Breast epithelium (tissue), 4 donors: ENCODE measurements at regions of chr15 and their contacts with region 1.

Region 1: DNA sequence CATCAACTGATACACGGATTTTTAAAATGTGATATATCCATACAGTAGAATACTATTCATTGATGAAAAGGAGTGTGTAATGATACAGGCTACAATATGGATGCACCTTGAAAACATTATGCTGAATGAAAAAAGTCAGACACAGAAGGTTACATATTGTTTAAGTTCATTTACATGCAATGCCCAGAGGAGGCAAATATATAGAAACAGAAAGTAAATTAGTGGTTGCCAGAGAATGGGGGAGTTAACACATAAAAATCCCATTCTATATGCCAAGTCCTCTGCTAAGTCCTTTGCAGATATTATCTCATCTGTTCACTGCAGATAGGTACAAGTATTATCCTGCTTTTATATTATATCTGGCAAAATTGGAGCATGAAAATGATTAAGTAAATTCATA is 22.1 kb upstream of the CDIN1 start:
- DNase-seq: no peak
- H3K4me3 ChIP-seq: no peak overlapping the region
- H3K27ac ChIP-seq: no peak overlapping the region
- H3K4me1 ChIP-seq: no peaks in the 10 kb centered on the region
- H3K27me3 ChIP-seq: no peaks in the 10 kb centered on the region
- CTCF ChIP-seq: no peak
- POLR2A ChIP-seq: no peak

Region 2: DNA sequence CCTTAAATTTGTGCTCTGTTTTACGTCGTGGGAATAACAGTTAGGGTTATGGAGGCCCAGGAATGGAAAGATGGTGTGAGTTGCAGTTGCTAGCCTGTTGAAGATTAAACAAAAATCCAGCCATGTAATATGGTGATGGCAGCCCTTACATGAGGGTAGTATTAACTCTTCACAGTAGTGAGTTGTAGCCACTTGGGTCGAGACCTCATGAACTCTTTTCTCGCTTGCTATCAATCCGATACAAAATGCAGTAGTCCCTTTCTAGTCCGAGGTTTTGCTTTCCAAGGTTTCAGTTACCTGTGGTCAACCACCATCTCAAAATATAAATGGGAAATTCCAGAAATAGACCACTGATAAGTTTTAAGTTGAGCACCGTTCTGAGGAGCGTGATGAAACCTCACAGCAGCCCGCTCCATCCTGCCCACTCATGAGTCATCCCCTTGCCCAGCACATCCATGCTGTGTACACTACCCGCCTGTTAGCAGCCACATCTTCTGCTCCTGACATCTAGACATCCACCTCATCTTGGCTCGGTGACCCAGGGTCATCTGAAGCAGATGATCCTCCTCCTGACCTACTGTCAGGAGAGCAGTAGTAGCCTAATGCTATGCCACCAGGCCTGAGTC is 199.9 kb after region 1 on chr15:
- intact Hi-C with region 1: loop called (anchors 10 kb)
- DNase-seq: no peak
- H3K4me3 ChIP-seq: no peak overlapping the region
- H3K27ac ChIP-seq: no peak overlapping the region
- H3K4me1 ChIP-seq: no peaks in the 10 kb centered on the region
- H3K27me3 ChIP-seq: no peaks in the 10 kb centered on the region
- CTCF ChIP-seq: no peak
- POLR2A ChIP-seq: no peak